ENCODE measurements at regions of chr17 and their contacts with region 1.

Region 1: GRCh38 chr17:36063786-36064541 is at the start of gene CCL18:
- DNase-seq: no peak
- ATAC-seq: no peak
- H3K4me3 ChIP-seq: no peak within 1 kb of the TSS
- H3K27ac ChIP-seq: no peak within 1 kb of the TSS
- H3K4me1 ChIP-seq: no peaks in the 10 kb centered on the region
- H3K27me3 ChIP-seq: 0 out of 4 replicates have a peak, but pooled peaks cover 0 to 2% of the 10 kb centered on the region in 2 experiments
- CTCF ChIP-seq: no peak
- EP300 ChIP-seq: no peak
- POLR2A ChIP-seq: no peak
- RAD21 ChIP-seq: no peak
- polyA plus RNA-seq, gene CCL18: not detected

Region 2: DNA sequence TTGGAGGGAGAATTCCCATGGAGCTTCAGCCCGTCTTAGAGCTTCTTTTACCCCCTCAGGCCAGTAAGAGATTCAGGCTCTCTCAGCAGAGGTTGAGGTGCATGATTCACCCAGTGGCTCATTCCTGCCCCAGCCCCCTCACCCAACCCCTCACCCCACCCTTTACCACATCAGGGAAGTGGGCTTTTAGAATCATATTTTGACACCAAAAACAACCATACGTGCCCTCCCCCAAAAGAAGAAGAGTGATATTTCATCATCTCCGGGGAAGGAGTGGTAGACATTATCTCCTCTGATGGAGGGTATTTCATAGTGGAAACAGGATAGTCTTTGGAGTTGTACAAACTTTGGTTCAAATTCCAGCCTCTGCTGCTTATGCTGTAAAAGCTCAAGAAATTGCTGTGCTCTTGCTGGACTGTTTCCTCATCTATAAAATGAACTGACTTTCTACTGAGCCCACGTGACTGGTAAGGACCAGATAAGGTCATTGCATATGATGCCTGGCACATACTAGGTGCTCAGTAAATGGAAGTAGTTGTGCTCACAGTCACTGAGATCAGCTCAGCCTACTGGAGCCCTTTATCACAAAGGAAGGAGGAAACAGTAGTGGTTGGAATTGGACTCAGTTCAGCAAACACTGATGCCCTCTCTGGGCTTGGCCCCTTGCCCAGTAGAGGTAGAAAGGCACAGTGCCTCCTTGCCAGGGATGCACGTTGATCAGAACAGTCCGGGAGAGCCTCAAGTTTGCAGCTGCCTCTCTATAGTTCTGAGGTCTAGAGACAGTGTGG is 165.5 kb before region 1 on chr17:
- CTCF ChIA-PET with region 1: no interaction called
- POLR2A ChIA-PET with region 1: no interaction called
- RAD21 ChIA-PET with region 1: no interaction called
- SMC1A ChIA-PET with region 1: no interaction called
- in situ Hi-C with region 1: no loop called
- intact Hi-C with region 1: no loop called
- DNase-seq: no peak
- ATAC-seq: no peak
- H3K4me3 ChIP-seq: no peak overlapping the region
- H3K27ac ChIP-seq: no peak overlapping the region
- H3K4me1 ChIP-seq: peaks cover 9% of the 10 kb centered on the region
- H3K27me3 ChIP-seq: no peaks in the 10 kb centered on the region
- CTCF ChIP-seq: no peak
- EP300 ChIP-seq: no peak
- POLR2A ChIP-seq: no peak
- RAD21 ChIP-seq: no peak

Region 3: GRCh38 chr17:35981908-35982330 is 82.0 kb before region 1 on chr17:
- CTCF ChIA-PET with region 1: interaction called, 392 read pairs
- POLR2A ChIA-PET with region 1: no interaction called
- RAD21 ChIA-PET with region 1: interaction called, 7 read pairs
- SMC1A ChIA-PET with region 1: interaction called, 341 read pairs
- in situ Hi-C with region 1: no loop called
- intact Hi-C with region 1: no loop called
- DNase-seq: no peak
- ATAC-seq: peak; percentile 49
- H3K4me3 ChIP-seq: no peak overlapping the region
- H3K27ac ChIP-seq: no peak overlapping the region
- H3K4me1 ChIP-seq: peaks cover 6% of the 10 kb centered on the region; the same call in 1 of the 2 replicates
- H3K27me3 ChIP-seq: no peaks in the 10 kb centered on the region
- CTCF ChIP-seq: peak; percentile 36 to 46 (median 39); a peak in 5 of 6 replicates
- EP300 ChIP-seq: no peak
- POLR2A ChIP-seq: no peak
- RAD21 ChIP-seq: peak; percentile 71